T-cell (primary cell): ENCODE measurements at regions of chr5 and their contacts with region 1.

Region 1: GRCh38 chr5:56774957-56775356 is 40.4 kb upstream of the MAP3K1 start:
- DNase-seq: no peak
- ATAC-seq: no peak
- H3K4me3 ChIP-seq: no peak overlapping the region
- H3K4me3 Mint-ChIP-seq: no peak overlapping the region
- H3K27ac ChIP-seq: no peak overlapping the region
- H3K27ac Mint-ChIP-seq: no peak overlapping the region
- H3K4me1 ChIP-seq: no peaks in the 10 kb centered on the region
- H3K4me1 Mint-ChIP-seq: no peaks in the 10 kb centered on the region
- H3K27me3 ChIP-seq: no peaks in the 10 kb centered on the region
- H3K27me3 Mint-ChIP-seq: no peaks in the 10 kb centered on the region

Region 2: DNA sequence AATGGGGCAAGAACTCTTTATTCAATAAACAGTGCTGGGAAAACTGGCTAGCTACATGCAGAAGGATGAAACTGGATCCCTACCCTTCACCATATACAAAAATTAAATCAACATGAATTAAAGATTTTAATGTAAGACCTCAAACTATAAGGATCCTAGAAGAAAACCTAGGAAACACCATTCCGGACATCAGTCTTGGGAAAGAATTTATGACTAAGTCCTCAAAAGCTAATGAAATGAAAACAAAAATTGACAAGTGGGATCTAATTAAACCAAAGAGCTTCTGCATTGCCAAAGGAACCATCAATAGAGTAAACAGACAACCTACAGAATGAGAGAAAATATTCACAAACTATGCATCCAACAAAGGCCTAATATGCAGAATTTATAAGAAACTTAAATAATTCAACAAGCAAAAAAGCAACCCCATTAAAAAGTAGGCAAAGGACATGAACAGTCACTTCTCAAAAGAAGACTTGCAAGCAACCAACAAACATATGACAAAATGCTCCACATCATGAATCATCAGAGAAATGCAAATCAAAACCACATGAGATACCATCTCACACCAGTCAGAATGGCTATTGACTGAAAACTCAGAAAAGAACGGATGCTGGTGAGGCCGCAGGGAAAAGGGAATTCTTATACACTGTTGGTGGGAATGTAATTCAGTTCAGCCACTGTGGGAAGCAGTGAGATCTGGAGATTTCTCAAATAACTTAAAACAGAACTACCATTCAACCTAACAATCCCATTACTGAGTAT is 63.9 kb before region 1 on chr5:
- CTCF ChIA-PET with region 1: no interaction called
- POLR2A ChIA-PET with region 1: interaction called in 1 of 2 experiments, 10 read pairs
- DNase-seq: no peak
- ATAC-seq: peak in 3 of 4 experiments; percentile 24 to 78 (median 49)
- H3K4me3 ChIP-seq: no peak overlapping the region
- H3K4me3 Mint-ChIP-seq: no peak overlapping the region
- H3K27ac ChIP-seq: no peak overlapping the region
- H3K27ac Mint-ChIP-seq: peak overlapping the region in 1 of 2 donors; percentile 16
- H3K4me1 ChIP-seq: no peaks in the 10 kb centered on the region
- H3K4me1 Mint-ChIP-seq: peaks cover 18 to 29% (median 21%) of the 10 kb centered on the region in 3 donors
- H3K27me3 ChIP-seq: no peaks in the 10 kb centered on the region
- H3K27me3 Mint-ChIP-seq: peaks cover 0 to 3% of the 10 kb centered on the region in 2 donors

Region 3: GRCh38 chr5:56814963-56815658 is 40.2 kb after region 1 on chr5 and contains the start of gene MAP3K1:
- CTCF ChIA-PET with region 1: no interaction called
- POLR2A ChIA-PET with region 1: no interaction called
- DNase-seq: peak; percentile 64 to 91 (median 77)
- ATAC-seq: peak; percentile 76 to 81 (median 80)
- H3K4me3 ChIP-seq: peak within 1 kb of the TSS; percentile 92 to 97
- H3K4me3 Mint-ChIP-seq: peak within 1 kb of the TSS; percentile 92 to 93 (median 93)
- H3K27ac ChIP-seq: peak within 1 kb of the TSS; percentile 72
- H3K27ac Mint-ChIP-seq: peak within 1 kb of the TSS; percentile 94 to 96
- H3K4me1 ChIP-seq: peaks cover 11 to 13% of the 10 kb centered on the region in 2 experiments
- H3K4me1 Mint-ChIP-seq: peaks cover 37 to 42% (median 38%) of the 10 kb centered on the region in 3 donors
- H3K27me3 ChIP-seq: no peaks in the 10 kb centered on the region
- H3K27me3 Mint-ChIP-seq: no peaks in the 10 kb centered on the region
- total RNA-seq, gene MAP3K1: 53.1 to 96.0 (median 80.6) TPM